Activated CD4-positive, alpha-beta T cell treated with anti-CD3 and anti-CD28 coated beads for 36 hours (primary cell): ENCODE measurements at regions of chr4 and their contacts with region 1.

Region 1: GRCh38 chr4:16026160-16026761 is 57.6 kb downstream of the PROM1 start:
- DNase-seq: peak; percentile 19
- ATAC-seq: no peak
- H3K4me3 Mint-ChIP-seq: no peak overlapping the region
- H3K27ac Mint-ChIP-seq: no peak overlapping the region
- H3K4me1 Mint-ChIP-seq: peaks cover 9% of the 10 kb centered on the region
- H3K27me3 Mint-ChIP-seq: peaks cover 7% of the 10 kb centered on the region

Region 2: GRCh38 chr4:16196478-16197393 is 170.5 kb after region 1 on chr4:
- CTCF ChIA-PET with region 1: interaction called, 6 read pairs
- POLR2A ChIA-PET with region 1: no interaction called
- intact Hi-C with region 1: loop called (anchors 1 to 2 kb)
- DNase-seq: no peak
- ATAC-seq: peak; percentile 19
- H3K4me3 Mint-ChIP-seq: no peak overlapping the region
- H3K27ac Mint-ChIP-seq: peak overlapping the region; percentile 4
- H3K4me1 Mint-ChIP-seq: peaks cover 36% of the 10 kb centered on the region
- H3K27me3 Mint-ChIP-seq: no peaks in the 10 kb centered on the region

Region 3: DNA sequence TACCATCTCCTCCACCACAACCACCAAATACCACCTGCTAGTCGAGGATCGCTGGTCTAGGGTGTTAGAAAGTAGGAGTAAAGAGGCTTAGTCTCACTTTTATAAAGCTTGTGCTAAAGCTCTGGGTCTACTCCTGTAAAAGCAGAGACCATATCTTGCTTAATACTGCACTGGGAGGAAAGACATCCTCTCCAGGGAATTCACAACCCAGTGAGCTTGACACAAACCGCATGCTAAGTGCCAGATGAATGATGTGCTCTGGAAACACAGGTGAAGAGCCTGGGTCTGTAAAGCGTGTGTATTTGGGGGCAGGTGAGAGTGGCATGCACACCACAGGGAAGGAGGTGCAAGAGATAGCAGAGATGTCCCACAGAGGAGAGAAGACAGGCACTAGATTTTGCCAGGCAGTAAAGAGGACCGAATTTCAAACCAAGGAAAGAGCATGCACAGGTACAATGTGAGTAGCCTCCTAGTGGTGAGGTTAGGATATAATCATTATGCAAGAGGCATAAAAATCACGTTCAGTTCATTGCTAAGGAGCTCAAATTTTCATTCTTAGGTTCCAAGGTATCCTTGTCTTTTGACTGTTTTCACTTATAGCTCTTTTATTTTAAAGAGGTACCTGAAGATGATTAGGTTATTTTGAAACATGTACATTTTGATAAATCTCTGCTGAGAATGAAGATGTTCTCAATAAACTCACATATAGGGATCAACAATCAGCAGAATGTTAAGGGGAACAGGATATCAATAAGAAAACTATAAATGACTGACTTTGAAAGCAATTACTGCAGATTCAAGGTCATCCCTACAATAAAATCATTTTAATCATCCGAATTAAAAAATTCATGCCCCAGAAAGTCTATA is 179.3 kb after region 1 on chr4:
- CTCF ChIA-PET with region 1: interaction called, 3 read pairs
- POLR2A ChIA-PET with region 1: no interaction called
- intact Hi-C with region 1: loop called in 1 of 2 experiments (anchors 2 kb)
- DNase-seq: no peak
- ATAC-seq: peak; percentile 68
- H3K4me3 Mint-ChIP-seq: no peak overlapping the region
- H3K27ac Mint-ChIP-seq: peak overlapping the region; percentile 16
- H3K4me1 Mint-ChIP-seq: peaks cover 51% of the 10 kb centered on the region
- H3K27me3 Mint-ChIP-seq: no peaks in the 10 kb centered on the region

Region 4: GRCh38 chr4:16443504-16444088 is 417.3 kb after region 1 on chr4:
- CTCF ChIA-PET with region 1: no interaction called
- POLR2A ChIA-PET with region 1: no interaction called
- intact Hi-C with region 1: loop called in 1 of 2 experiments (anchors 1 kb)
- DNase-seq: no peak
- ATAC-seq: peak; percentile 44
- H3K4me3 Mint-ChIP-seq: no peak overlapping the region
- H3K27ac Mint-ChIP-seq: no peak overlapping the region
- H3K4me1 Mint-ChIP-seq: no peaks in the 10 kb centered on the region
- H3K27me3 Mint-ChIP-seq: peaks cover 4% of the 10 kb centered on the region